Activated T-helper 1 cell treated with anti-CD3 and anti-CD28 coated beads, Interleukin-12 subunit alpha, Interleukin-12 subunit beta, Interleukin-2, Interleukin-4 antibody, amounts not matched to agents 30 ng/mL and 10 ng/mL and 1 ng/mL, durations not matched to agents 14 hours and 24 hours and 36 hours (primary cell): ENCODE measurements at regions of chr15 and their contacts with region 1.

Region 1: GRCh38 chr15:39580117-39580484 is 778 bp upstream of the THBS1 start:
- DNase-seq: peak; percentile 83
- H3K4me3 Mint-ChIP-seq: peak overlapping the region; percentile 84
- H3K27ac Mint-ChIP-seq: no peak overlapping the region
- H3K4me1 Mint-ChIP-seq: peaks cover 24% of the 10 kb centered on the region
- H3K27me3 Mint-ChIP-seq: peaks cover 58% of the 10 kb centered on the region

Region 2: GRCh38 chr15:38707802-38708671 is 872.1 kb before region 1 on chr15:
- intact Hi-C with region 1: loop called (anchors 1 kb)
- DNase-seq: no peak
- H3K4me3 Mint-ChIP-seq: no peak overlapping the region
- H3K27ac Mint-ChIP-seq: no peak overlapping the region
- H3K4me1 Mint-ChIP-seq: peaks cover 26% of the 10 kb centered on the region
- H3K27me3 Mint-ChIP-seq: peaks cover 10% of the 10 kb centered on the region

Region 3: DNA sequence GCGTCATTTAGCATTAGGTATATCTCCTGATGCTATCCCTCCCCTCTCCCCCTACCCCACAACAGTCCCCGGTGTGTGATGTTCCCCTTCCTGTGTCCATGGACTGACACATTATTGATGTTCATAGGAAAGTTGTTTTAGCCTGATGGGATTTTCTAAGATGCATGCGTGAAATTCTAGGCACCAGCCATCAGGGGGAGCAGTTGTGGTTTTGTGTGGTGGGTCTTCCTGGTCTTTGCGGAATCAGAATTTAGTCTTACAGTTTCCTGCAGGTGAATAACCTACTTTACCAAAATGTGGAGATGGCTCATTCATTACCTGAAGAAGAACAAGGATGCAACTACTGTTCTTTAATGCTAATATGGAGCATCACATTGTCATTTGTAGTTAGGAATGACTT is 454.2 kb before region 1 on chr15:
- intact Hi-C with region 1: loop called (anchors 1 kb)
- DNase-seq: peak; percentile 15
- H3K4me3 Mint-ChIP-seq: no peak overlapping the region
- H3K27ac Mint-ChIP-seq: no peak overlapping the region
- H3K4me1 Mint-ChIP-seq: peaks cover 19% of the 10 kb centered on the region
- H3K27me3 Mint-ChIP-seq: peaks cover 7% of the 10 kb centered on the region

Region 4: DNA sequence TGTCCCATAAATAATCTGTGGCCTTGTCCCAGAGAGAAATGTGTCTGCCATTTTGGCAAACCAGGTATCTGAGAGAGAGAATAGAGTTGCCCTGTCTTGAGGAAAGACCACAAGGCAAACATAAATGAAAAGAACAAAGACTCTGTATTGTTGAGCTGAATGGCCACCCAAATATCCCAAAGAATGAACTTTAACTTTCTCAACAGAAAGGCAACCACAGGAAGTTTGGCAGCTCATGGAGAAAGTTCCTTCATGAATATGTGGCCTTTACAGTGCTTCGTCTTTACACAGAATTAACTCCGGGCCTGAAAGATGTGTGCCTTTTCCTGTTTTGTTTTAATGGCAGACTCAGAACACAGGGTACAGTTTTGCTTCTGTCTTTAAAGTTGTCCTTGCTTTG is 40.6 kb before region 1 on chr15:
- intact Hi-C with region 1: no loop called
- DNase-seq: no peak
- H3K4me3 Mint-ChIP-seq: no peak overlapping the region
- H3K27ac Mint-ChIP-seq: no peak overlapping the region
- H3K4me1 Mint-ChIP-seq: no peaks in the 10 kb centered on the region
- H3K27me3 Mint-ChIP-seq: no peaks in the 10 kb centered on the region

Region 5: GRCh38 chr15:39624806-39625205 is 44.7 kb after region 1 on chr15:
- intact Hi-C with region 1: loop called (anchors 2 kb)
- DNase-seq: peak; percentile 65
- H3K4me3 Mint-ChIP-seq: peak overlapping the region; percentile 71
- H3K27ac Mint-ChIP-seq: peak overlapping the region; percentile 98
- H3K4me1 Mint-ChIP-seq: peaks cover 81% of the 10 kb centered on the region
- H3K27me3 Mint-ChIP-seq: no peaks in the 10 kb centered on the region

Region 6: GRCh38 chr15:39756806-39757522 is 176.9 kb after region 1 on chr15:
- intact Hi-C with region 1: loop called (anchors 1 kb)
- DNase-seq: no peak
- H3K4me3 Mint-ChIP-seq: no peak overlapping the region
- H3K27ac Mint-ChIP-seq: no peak overlapping the region
- H3K4me1 Mint-ChIP-seq: no peaks in the 10 kb centered on the region
- H3K27me3 Mint-ChIP-seq: peaks cover 44% of the 10 kb centered on the region